Activated CD4-positive, alpha-beta T cell treated with anti-CD3 and anti-CD28 coated beads, Interleukin-2, amount 10 ng/mL, durations not matched to agents 24 days and 14 days (primary cell): ENCODE measurements at regions of chr9 and their contacts with region 1.

Region 1: DNA sequence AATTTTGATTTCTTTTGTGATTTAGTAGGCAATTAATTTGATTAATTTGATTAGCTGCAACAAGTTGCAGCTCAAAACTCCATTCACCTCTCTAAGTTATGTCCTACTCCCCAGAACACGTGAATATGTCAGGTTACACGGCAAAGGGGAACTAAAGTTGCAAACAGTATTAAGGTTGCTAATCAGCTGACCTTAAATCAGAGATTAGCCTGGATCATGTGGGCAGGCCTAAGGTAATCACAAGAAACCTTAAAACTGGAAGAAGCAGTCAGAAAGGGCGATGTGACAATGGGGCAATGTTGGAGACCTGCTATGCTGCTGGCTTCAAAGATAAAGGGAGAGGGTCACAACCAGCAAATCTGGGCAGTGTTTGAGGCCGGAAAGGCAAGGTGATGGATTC is 47.3 kb upstream of the ANXA1 start:
- DNase-seq: no peak
- H3K4me3 Mint-ChIP-seq: no peak overlapping the region
- H3K27ac Mint-ChIP-seq: no peak overlapping the region
- H3K4me1 Mint-ChIP-seq: no peaks in the 10 kb centered on the region
- H3K27me3 Mint-ChIP-seq: peaks cover 22% of the 10 kb centered on the region

Region 2: GRCh38 chr9:72726947-72727346 is 377.4 kb before region 1 on chr9:
- intact Hi-C with region 1: no loop called
- DNase-seq: no peak
- H3K4me3 Mint-ChIP-seq: no peak overlapping the region
- H3K27ac Mint-ChIP-seq: no peak overlapping the region
- H3K4me1 Mint-ChIP-seq: no peaks in the 10 kb centered on the region
- H3K27me3 Mint-ChIP-seq: peaks cover 7% of the 10 kb centered on the region

Region 3: DNA sequence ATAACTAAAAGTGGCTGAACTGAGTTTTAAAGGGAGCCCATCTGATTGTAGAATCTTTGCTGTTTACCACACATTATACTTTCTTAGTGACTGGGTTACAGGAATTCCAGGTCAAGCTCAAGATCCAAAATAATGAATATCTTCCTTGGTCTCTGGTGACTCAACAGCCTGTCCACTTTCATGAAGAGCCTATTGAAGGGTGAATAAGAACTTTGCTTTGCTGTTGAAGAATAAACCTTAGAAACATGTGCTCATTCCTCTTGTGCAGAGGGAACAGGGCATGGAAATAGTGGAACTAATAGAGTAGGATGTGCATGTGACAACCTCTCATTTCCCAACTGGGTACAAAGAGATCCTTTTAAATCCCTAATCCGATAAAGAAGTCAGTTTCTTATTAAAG is 172.9 kb before region 1 on chr9:
- intact Hi-C with region 1: no loop called
- DNase-seq: no peak
- H3K4me3 Mint-ChIP-seq: no peak overlapping the region
- H3K27ac Mint-ChIP-seq: no peak overlapping the region
- H3K4me1 Mint-ChIP-seq: no peaks in the 10 kb centered on the region
- H3K27me3 Mint-ChIP-seq: peaks cover 2% of the 10 kb centered on the region

Region 4: GRCh38 chr9:73183917-73184861 is 79.8 kb after region 1 on chr9:
- intact Hi-C with region 1: loop called (anchors 1 kb)
- DNase-seq: no peak
- H3K4me3 Mint-ChIP-seq: no peak overlapping the region
- H3K27ac Mint-ChIP-seq: no peak overlapping the region
- H3K4me1 Mint-ChIP-seq: peaks cover 5% of the 10 kb centered on the region
- H3K27me3 Mint-ChIP-seq: peaks cover 33% of the 10 kb centered on the region